Endothelial cell of umbilical vein (primary cell): ENCODE measurements at regions of chr10 and their contacts with region 1.

Region 1: DNA sequence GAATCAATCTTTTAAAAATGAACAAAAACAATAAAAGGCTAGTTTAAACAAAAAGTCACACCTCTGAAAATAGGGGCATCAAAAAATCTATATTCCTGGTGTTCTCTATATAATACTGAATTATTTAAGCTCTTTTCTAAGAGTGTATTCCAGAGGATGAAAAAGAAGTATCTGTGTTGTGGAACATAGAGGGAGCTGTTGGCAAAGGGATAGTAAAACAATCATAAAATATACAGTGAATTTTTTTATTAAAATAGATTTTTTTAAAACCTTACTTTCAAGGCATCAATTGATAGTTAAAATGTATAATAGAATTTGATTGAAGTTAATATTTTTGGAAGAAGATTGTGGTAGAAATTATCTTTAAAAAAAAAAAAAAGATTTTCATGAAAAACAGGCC is 1409.1 kb upstream of the CELF2 start:
- DNase-seq: peak; percentile 14
- H3K4me3 ChIP-seq: no peak overlapping the region
- H3K27ac ChIP-seq: no peak overlapping the region
- H3K4me1 ChIP-seq: peaks cover 2% of the 10 kb centered on the region
- H3K27me3 ChIP-seq: no peaks in the 10 kb centered on the region
- CTCF ChIP-seq: no peak
- POLR2A ChIP-seq: no peak

Region 2: DNA sequence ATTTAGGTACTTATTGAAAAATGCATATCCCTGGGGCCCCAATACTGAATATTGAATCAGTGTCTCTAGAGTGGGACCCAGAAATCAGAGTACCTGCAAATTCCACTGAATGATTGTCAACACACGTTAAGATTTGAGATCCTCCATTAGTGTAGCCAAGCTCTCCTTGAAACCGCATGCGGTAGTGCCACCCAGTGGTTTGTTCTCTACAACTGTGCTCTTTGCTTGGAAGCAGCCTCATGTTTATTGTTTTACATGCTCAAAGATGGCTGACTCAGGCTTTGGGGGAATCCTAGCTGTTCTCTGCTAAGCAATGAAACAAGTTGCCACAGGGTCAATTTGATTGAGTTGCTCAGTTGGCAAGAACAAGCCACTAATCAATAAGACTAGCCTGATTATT is 1068.9 kb after region 1 on chr10:
- CTCF ChIA-PET with region 1: interaction called, 3 read pairs
- POLR2A ChIA-PET with region 1: interaction called, 4 read pairs
- dilution Hi-C with region 1: no loop called
- intact Hi-C with region 1: loop called (anchors 1 kb)
- DNase-seq: peak; percentile 50
- H3K4me3 ChIP-seq: no peak overlapping the region
- H3K27ac ChIP-seq: no peak overlapping the region
- H3K4me1 ChIP-seq: no peaks in the 10 kb centered on the region
- H3K27me3 ChIP-seq: no peaks in the 10 kb centered on the region
- CTCF ChIP-seq: peak; percentile 19 to 25
- POLR2A ChIP-seq: no peak